ENCODE measurements at regions of chr1 and their contacts with region 1.

Region 1: GRCh38 chr1:155227261-155228095 is 19.0 kb downstream of the MTX1 start:
- DNase-seq: peak; percentile 98 to 99
- H3K4me3 ChIP-seq: peak overlapping the region; percentile 55 to 68 (median 63)
- H3K27ac ChIP-seq: peak overlapping the region; percentile 79 to 94 (median 90)
- H3K4me1 ChIP-seq: peaks cover 13 to 44% (median 29%) of the 10 kb centered on the region in 4 donors
- H3K27me3 ChIP-seq: no peaks in the 10 kb centered on the region
- CTCF ChIP-seq: no peak
- EP300 ChIP-seq: no peak
- POLR2A ChIP-seq: no peak

Region 2: GRCh38 chr1:154955718-154956543 is 271.5 kb before region 1 on chr1 and contains the start of gene PBXIP1:
- intact Hi-C with region 1: no loop called
- DNase-seq: peak; percentile 83 to 97
- H3K4me3 ChIP-seq: peak within 1 kb of the TSS; percentile 57 to 61 (median 59)
- H3K27ac ChIP-seq: peak within 1 kb of the TSS; percentile 81 to 86 (median 85)
- H3K4me1 ChIP-seq: peaks cover 62 to 97% (median 86%) of the 10 kb centered on the region in 4 donors
- H3K27me3 ChIP-seq: no peaks in the 10 kb centered on the region
- CTCF ChIP-seq: no peak
- EP300 ChIP-seq: no peak
- POLR2A ChIP-seq: peak in 1 of 4 donors; percentile 17
- total RNA-seq, gene PBXIP1: 66.5 to 123 (median 81.1) TPM

Region 3: GRCh38 chr1:155172732-155173477 is 54.6 kb before region 1 on chr1 and contains the start of gene KRTCAP2:
- intact Hi-C with region 1: loop called (anchors 10 kb)
- DNase-seq: peak; percentile 96 to 98
- H3K4me3 ChIP-seq: peak within 1 kb of the TSS; percentile 84 to 94 (median 90)
- H3K27ac ChIP-seq: peak within 1 kb of the TSS; percentile 80 to 96 (median 93)
- H3K4me1 ChIP-seq: peaks cover 42 to 70% (median 62%) of the 10 kb centered on the region in 4 donors
- H3K27me3 ChIP-seq: peaks cover 0 to 19% (median 6%) of the 10 kb centered on the region in 3 donors
- CTCF ChIP-seq: peak in 6 of 7 experiments; percentile 65 to 99 (median 87)
- EP300 ChIP-seq: no peak
- POLR2A ChIP-seq: no peak
- total RNA-seq, gene KRTCAP2: 60.8 to 238 (median 133) TPM